Activated CD8-positive, alpha-beta T cell treated with anti-CD3 and anti-CD28 coated beads for 36 hours (primary cell): ENCODE measurements at regions of chr18 and their contacts with region 1.

Region 1: GRCh38 chr18:79507076-79507545 is 111.4 kb downstream of the NFATC1 start:
- DNase-seq: peak; percentile 43
- ATAC-seq: peak; percentile 43
- H3K4me3 Mint-ChIP-seq: peak overlapping the region; percentile 63
- H3K27ac Mint-ChIP-seq: peak overlapping the region; percentile 90
- H3K4me1 Mint-ChIP-seq: peaks cover 64% of the 10 kb centered on the region
- H3K27me3 Mint-ChIP-seq: no peaks in the 10 kb centered on the region
- CTCF ChIP-seq: no peak

Region 2: GRCh38 chr18:79302120-79302519 is 205.0 kb before region 1 on chr18:
- CTCF ChIA-PET with region 1: no interaction called
- POLR2A ChIA-PET with region 1: no interaction called
- intact Hi-C with region 1: no loop called
- DNase-seq: no peak
- ATAC-seq: no peak
- H3K4me3 Mint-ChIP-seq: no peak overlapping the region
- H3K27ac Mint-ChIP-seq: no peak overlapping the region
- H3K4me1 Mint-ChIP-seq: no peaks in the 10 kb centered on the region
- H3K27me3 Mint-ChIP-seq: no peaks in the 10 kb centered on the region
- CTCF ChIP-seq: no peak

Region 3: GRCh38 chr18:79517341-79517740 is 10.2 kb after region 1 on chr18:
- CTCF ChIA-PET with region 1: interaction called, 3 read pairs
- POLR2A ChIA-PET with region 1: interaction called, 24 read pairs
- intact Hi-C with region 1: no loop called
- DNase-seq: peak; percentile 84
- ATAC-seq: peak; percentile 59
- H3K4me3 Mint-ChIP-seq: peak overlapping the region; percentile 66
- H3K27ac Mint-ChIP-seq: peak overlapping the region; percentile 99
- H3K4me1 Mint-ChIP-seq: peaks cover 69% of the 10 kb centered on the region
- H3K27me3 Mint-ChIP-seq: no peaks in the 10 kb centered on the region
- CTCF ChIP-seq: peak; percentile 13